Right ventricle myocardium superior (tissue), 1 donor: ENCODE measurements at regions of chr9 and their contacts with region 1.

Region 1: DNA sequence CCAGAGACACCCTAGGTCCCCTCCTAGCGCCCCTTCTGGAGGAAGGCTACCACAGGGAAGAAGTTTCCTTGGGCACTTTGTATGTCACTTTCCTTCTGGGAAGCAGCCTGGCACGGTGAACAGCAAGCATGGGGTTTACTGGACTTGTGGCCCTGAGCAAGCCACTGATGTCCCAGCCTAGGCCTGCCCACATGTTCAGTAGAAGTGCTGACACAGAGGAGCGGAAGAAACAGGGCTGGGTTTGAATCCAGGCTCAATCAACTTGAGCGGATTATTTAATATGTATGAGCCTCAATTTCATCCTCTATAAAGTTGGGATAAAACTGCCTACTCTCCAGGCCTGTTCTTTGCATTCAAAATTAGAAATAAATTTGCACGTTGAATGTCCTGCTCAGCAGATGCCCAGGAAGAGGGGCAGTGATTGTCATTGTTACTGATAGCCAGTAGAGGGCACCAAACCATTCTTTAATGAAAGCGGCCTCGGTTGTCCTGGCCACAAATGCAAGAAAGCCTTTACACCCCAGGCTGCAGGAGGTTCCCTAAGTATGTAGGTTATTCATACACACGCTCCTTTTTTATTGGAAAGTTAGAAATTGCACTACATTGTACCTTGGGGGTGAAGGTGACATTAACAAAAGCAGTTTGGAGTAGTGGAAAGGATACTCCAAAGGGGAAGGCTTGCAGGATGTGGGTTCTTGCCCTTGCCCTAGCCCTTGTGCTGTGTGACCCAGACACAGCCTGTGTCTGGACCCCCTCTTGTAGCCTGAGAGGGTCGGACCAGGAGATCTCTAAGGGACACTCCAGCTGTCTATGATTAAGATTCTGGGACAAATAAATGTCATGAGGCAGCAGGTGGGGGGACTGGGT is 13.4 kb upstream of the XPA start:
- DNase-seq: no peak
- ATAC-seq: peak; percentile 92

Region 2: DNA sequence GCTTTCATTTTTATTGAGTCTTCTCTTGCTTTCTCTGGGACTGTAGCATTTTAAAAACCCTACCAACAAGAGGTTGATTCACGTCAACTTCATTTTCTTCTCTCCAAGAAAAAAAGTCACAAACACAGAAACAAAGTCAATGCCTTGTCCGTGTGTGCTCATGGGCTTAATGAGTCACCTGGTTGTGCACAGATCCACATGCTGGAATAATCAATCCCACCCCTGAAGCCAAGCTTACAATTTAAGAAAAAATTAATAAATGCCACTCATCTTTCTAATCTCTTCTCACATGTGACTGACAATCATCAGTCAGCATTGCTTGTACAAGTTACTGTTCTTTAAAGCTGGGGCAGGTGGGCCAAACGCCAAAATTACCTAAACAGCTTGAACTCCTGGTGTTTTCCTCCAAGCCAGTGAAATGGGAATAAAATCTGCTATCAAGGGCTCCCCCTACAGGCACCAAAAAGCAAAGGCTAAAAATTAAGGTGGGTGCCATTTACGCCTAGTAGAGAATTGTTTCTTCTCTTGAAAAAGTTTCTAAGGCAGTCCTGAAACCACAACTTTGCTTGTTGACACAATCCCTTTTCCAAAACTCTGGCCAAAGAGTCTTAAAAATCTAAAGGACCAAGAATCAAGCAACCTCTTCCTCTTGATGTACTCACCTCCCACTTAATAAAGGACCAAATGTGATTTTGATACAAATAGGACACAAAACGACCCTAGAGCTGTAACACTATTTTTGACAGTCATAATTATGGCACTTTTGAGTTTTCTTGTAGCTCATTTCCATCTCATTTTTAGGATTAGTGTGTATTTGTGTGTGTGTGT is 190.4 kb after region 1 on chr9:
- intact Hi-C with region 1: loop called (anchors 2 kb)
- DNase-seq: no peak
- ATAC-seq: peak; percentile 74

Region 3: GRCh38 chr9:98678242-98678842 is 967.8 kb after region 1 on chr9:
- intact Hi-C with region 1: no loop called
- DNase-seq: no peak
- ATAC-seq: no peak